Natural killer cell (primary cell): ENCODE measurements at regions of chr11 and their contacts with region 1.

Region 1: DNA sequence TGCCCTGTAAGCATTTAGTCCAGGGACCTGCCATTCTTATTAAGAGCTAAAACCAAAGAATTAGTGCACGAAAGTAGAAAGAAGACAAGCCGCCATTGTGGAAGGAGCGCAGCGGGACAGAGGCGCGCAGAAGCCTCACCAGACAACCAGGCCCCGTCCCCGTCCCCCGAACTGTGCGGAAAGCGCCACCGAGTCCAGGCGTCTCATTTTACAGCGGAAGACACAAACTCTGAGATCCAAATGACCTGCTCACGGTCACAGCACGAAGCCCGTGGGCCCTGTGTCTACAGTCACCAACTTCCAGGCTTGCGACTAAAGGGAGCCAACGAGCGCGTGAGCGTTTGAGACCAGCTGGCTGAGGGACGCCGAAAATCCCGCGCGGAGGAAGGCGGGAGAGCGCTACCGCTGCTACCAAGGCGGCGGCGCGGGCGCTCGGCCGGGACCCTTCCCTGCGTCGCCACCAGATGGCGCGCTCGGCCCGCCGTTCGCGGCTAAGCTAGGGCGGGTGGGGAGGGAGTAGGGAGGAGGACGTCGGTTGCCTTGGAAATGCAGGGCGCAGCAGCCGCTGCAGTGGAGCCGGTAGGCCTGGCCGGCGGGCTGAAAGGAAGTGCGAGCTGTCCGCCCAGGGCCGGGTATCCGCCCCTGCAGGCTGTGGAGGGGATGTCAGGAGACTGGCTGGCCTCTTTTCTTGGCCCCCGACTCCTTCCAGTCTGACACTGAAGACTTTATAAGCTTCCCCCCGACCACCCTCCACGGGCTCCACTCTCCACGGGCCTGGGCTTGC is 434 bp upstream of the CCDC83 start:
- DNase-seq: peak; percentile 91 to 92
- ATAC-seq: peak; percentile 92 to 99 (median 93)
- H3K4me3 ChIP-seq: peak overlapping the region; percentile 39
- H3K4me3 Mint-ChIP-seq: peak overlapping the region; percentile 94
- H3K27ac ChIP-seq: peak overlapping the region; percentile 71
- H3K27ac Mint-ChIP-seq: peak overlapping the region; percentile 94 to 96
- H3K4me1 ChIP-seq: peaks cover 11% of the 10 kb centered on the region
- H3K4me1 Mint-ChIP-seq: peaks cover 16% of the 10 kb centered on the region in 2 donors
- H3K27me3 ChIP-seq: no peaks in the 10 kb centered on the region
- H3K27me3 Mint-ChIP-seq: peaks cover 0 to 14% of the 10 kb centered on the region in 2 donors
- CTCF ChIP-seq: peak; percentile 85

Region 2: DNA sequence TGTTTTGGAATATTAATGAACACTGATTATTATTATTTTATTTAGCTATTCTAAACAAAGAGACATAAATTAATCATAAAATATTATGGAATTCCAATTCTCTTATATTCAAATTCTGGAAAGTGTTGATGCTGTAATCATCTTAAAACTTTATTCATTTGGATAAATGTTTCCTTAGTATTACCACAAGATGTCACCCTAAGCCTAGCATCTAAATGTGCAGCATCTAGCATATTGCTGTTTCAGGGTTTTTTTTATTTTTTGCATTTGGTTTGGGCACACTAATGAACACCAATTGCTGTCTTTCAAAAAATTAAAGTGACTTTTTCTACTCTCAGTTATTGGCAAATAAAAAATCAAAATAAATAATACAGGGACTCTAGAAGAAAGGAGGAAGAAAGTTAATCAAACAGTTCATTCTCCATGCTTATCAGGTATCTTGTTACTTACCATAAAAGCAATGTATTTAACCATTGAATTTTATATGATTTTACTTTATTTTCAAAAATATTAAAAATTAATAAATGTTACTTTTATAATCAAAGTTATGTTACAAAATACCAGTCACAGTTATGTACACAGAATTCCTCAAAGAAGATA is 259.4 kb before region 1 on chr11:
- intact Hi-C with region 1: loop called (anchors 10 kb)
- DNase-seq: peak in 1 of 2 donors; percentile 75
- ATAC-seq: peak; percentile 61 to 75 (median 68)
- H3K4me3 ChIP-seq: no peak overlapping the region
- H3K4me3 Mint-ChIP-seq: no peak overlapping the region
- H3K27ac ChIP-seq: no peak overlapping the region
- H3K27ac Mint-ChIP-seq: no peak overlapping the region
- H3K4me1 ChIP-seq: no peaks in the 10 kb centered on the region
- H3K4me1 Mint-ChIP-seq: no peaks in the 10 kb centered on the region
- H3K27me3 ChIP-seq: no peaks in the 10 kb centered on the region
- H3K27me3 Mint-ChIP-seq: peaks cover 0 to 5% of the 10 kb centered on the region in 2 donors
- CTCF ChIP-seq: peak; percentile 77

Region 3: DNA sequence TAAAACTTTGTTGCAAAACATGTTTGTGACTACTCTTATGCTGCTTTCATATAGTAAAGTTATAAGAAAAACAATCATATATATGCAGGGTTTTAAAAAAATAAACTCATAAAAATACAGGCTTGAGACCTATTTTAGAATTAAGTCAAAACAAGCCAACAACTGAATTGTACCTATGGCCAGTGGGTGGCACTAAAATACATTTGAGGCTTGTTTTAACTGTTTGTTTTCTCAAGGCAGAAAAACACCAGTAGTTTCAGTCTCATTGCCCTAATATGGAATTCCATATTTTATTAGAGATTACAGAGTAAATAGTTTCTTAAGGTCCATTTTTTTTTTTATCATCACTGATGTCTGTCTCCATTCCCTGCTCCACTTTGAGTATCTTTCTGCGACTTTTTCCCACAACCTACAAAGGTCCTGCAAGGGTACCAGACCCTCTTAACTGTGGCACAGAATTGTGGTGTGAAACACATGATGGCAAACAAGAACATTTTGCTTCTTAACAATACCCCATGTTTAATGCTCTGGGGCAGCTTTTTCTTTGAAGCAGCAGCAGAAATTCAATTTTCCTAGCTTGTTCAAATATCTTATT is 160.3 kb before region 1 on chr11:
- intact Hi-C with region 1: loop called (anchors 10 kb)
- DNase-seq: peak in 1 of 2 donors; percentile 71
- ATAC-seq: peak; percentile 44 to 76 (median 67)
- H3K4me3 ChIP-seq: no peak overlapping the region
- H3K4me3 Mint-ChIP-seq: no peak overlapping the region
- H3K27ac ChIP-seq: no peak overlapping the region
- H3K27ac Mint-ChIP-seq: peak overlapping the region in 1 of 2 donors; percentile 19
- H3K4me1 ChIP-seq: peaks cover 1% of the 10 kb centered on the region
- H3K4me1 Mint-ChIP-seq: peaks cover 3 to 12% of the 10 kb centered on the region in 2 donors
- H3K27me3 ChIP-seq: no peaks in the 10 kb centered on the region
- H3K27me3 Mint-ChIP-seq: no peaks in the 10 kb centered on the region
- CTCF ChIP-seq: peak; percentile 68

Region 4: DNA sequence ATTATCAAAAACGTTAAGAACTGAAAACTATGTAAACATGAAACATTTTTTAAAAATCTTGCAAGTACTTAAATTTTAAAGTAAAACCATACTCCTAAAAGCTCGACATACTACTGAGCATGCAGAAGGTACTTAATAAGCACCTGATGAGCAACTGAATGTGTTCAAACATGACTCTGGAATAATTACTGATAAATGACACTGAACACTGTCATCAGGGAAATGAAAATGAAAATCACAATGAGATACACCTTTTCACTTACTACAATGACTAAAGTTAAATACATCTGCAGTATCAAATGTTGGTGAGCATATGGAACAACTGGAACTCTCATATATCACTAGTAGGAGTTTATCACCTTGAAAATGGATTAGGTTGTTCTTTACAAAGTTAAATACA is 148.9 kb after region 1 on chr11:
- intact Hi-C with region 1: no loop called
- DNase-seq: no peak
- ATAC-seq: no peak
- H3K4me3 ChIP-seq: no peak overlapping the region
- H3K4me3 Mint-ChIP-seq: no peak overlapping the region
- H3K27ac ChIP-seq: no peak overlapping the region
- H3K27ac Mint-ChIP-seq: peak overlapping the region; percentile 19 to 74
- H3K4me1 ChIP-seq: no peaks in the 10 kb centered on the region
- H3K4me1 Mint-ChIP-seq: peaks cover 13 to 17% of the 10 kb centered on the region in 2 donors
- H3K27me3 ChIP-seq: no peaks in the 10 kb centered on the region
- H3K27me3 Mint-ChIP-seq: no peaks in the 10 kb centered on the region
- CTCF ChIP-seq: no peak

Region 5: GRCh38 chr11:86035164-86035563 is 180.4 kb after region 1 on chr11:
- intact Hi-C with region 1: loop called (anchors 10 kb)
- DNase-seq: no peak
- ATAC-seq: no peak
- H3K4me3 ChIP-seq: no peak overlapping the region
- H3K4me3 Mint-ChIP-seq: no peak overlapping the region
- H3K27ac ChIP-seq: no peak overlapping the region
- H3K27ac Mint-ChIP-seq: peak overlapping the region; percentile 35 to 75
- H3K4me1 ChIP-seq: peaks cover 11% of the 10 kb centered on the region
- H3K4me1 Mint-ChIP-seq: peaks cover 54 to 62% of the 10 kb centered on the region in 2 donors
- H3K27me3 ChIP-seq: no peaks in the 10 kb centered on the region
- H3K27me3 Mint-ChIP-seq: no peaks in the 10 kb centered on the region
- CTCF ChIP-seq: no peak

Region 6: DNA sequence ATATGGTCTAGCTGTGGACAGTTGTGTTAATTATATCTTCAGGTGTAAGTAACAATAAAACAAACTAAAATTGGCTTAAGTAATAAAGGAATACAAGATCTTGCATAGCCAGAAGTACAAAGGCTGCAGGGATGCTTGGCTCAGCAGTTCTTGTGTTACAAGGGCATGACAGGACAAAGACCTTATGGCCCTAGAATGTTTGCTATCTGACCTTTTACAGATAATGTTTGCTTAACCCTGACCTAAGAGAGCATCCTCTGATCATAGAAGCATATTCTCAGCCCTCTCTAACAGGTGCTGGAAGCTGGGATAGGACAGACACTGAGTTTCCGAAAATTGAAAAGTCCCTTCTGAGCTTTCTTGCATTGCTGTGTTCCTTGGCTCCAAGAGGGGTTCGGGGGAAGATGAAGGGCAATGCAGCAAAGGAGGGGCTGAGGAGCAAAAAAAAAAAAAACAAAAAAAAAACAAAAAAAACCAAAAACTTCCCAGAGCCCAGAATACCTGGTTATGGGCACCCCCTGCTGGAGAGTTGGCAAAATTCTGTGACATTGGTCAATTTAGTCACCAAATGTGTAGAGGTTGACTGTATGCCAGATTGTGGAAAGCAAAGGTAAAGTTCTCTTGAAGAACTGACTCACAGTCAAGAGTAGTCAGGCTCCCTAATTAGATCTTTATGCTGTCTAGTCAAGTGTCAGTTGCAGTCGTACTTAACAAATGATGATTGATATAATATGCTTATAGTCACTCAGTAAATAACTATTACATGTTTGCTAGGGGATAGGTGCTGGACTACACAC is 436.9 kb after region 1 on chr11:
- intact Hi-C with region 1: loop called (anchors 5 kb)
- DNase-seq: peak in 1 of 2 donors; percentile 78
- ATAC-seq: peak; percentile 49 to 79 (median 66)
- H3K4me3 ChIP-seq: no peak overlapping the region
- H3K4me3 Mint-ChIP-seq: no peak overlapping the region
- H3K27ac ChIP-seq: no peak overlapping the region
- H3K27ac Mint-ChIP-seq: no peak overlapping the region
- H3K4me1 ChIP-seq: peaks cover 11% of the 10 kb centered on the region
- H3K4me1 Mint-ChIP-seq: peaks cover 5 to 6% of the 10 kb centered on the region in 2 donors
- H3K27me3 ChIP-seq: no peaks in the 10 kb centered on the region
- H3K27me3 Mint-ChIP-seq: no peaks in the 10 kb centered on the region
- CTCF ChIP-seq: peak; percentile 65